Naive thymus-derived CD4-positive, alpha-beta T cell (primary cell): ENCODE measurements at regions of chr21 and their contacts with region 1.

Region 1: DNA sequence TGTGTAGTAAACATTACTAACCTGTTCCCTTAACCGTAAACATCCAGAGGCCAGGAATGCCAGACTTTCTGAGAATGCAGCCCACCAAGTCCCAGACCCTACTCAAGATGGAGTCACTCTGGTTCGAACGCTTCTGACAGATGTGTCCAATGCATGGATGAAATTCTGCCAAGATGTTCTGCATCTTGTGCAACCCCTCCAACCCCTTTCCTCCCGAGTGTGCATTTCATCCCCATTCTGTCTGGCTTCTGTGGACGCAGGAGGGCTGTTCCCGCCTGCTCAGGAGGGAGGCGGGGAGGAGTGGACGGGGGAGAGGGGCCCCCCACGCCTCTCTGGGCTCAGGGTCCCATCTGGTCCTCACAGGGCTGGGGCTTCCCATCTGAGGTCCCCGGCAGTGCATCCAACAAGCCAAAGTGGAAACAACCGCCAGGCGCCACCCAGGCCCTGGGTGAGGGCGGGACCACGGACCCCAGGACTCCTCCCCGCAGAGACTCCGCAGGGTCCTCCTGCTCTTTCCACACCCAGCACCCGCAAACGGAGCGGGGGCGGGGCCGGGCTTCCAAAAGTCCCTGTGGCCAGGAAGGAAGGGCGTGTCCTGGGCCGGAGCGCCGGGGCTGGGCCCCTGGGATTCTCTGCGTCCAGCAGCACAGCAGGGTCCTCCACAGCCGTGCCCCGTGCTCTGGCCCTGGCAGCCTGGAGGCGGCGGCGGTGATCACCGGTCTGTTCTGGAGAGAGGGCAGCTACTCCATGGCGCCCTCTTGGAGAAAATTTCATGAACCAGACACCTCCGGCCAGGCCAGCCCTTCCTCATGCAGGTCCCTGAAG is 27.7 kb upstream of the SUMO3 start:
- DNase-seq: peak; percentile 15 to 75 (median 37)
- ATAC-seq: peak; percentile 77
- H3K4me3 ChIP-seq: peak overlapping the region; percentile 51
- H3K4me3 Mint-ChIP-seq: peak overlapping the region; percentile 65 to 80 (median 78)
- H3K27ac ChIP-seq: peak overlapping the region; percentile 58
- H3K27ac Mint-ChIP-seq: peak overlapping the region; percentile 57 to 90 (median 76)
- H3K4me1 ChIP-seq: peaks cover 6 to 11% of the 10 kb centered on the region in 2 donors
- H3K4me1 Mint-ChIP-seq: peaks cover 3 to 24% (median 13%) of the 10 kb centered on the region in 7 donors
- H3K27me3 ChIP-seq: no peaks in the 10 kb centered on the region
- H3K27me3 Mint-ChIP-seq: peaks cover 0 to 4% (median 0%) of the 10 kb centered on the region in 5 donors

Region 2: DNA sequence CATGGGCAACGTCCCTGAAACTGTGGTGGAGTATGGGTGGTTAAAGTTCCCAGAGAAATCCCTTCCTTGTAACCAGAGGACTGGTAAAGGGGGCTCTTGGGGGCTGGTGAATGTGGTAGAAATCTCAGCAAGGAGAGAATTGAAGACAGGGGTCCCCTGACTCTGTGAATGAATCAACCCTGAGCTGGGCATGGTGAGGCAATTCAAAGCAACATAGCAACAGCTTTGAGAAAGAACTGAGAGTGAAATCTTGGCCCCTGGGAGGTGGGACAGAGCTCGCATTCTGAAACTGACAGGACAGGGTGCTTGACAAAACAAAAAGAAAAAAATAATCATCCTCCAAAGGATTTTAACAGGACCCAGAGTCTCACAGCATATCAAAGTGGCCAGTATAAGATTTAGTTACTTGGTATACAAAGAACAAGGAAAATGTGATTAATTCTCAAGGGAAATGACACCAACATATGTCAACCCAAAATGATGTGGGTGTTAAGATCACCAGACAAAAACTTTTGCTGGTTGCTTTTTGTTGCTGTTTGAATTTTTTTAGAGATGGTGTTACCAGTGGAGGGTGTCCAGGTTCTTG is 16.0 kb before region 1 on chr21:
- CTCF ChIA-PET with region 1: no interaction called
- POLR2A ChIA-PET with region 1: no interaction called
- intact Hi-C with region 1: loop called in 1 of 2 experiments (anchors 2 kb)
- DNase-seq: no peak
- ATAC-seq: peak; percentile 32
- H3K4me3 ChIP-seq: no peak overlapping the region
- H3K4me3 Mint-ChIP-seq: no peak overlapping the region
- H3K27ac ChIP-seq: no peak overlapping the region
- H3K27ac Mint-ChIP-seq: no peak overlapping the region
- H3K4me1 ChIP-seq: peaks cover 0 to 5% of the 10 kb centered on the region in 2 donors
- H3K4me1 Mint-ChIP-seq: peaks cover 6 to 32% (median 15%) of the 10 kb centered on the region in 7 donors
- H3K27me3 ChIP-seq: no peaks in the 10 kb centered on the region
- H3K27me3 Mint-ChIP-seq: peaks cover 0 to 6% (median 0%) of the 10 kb centered on the region in 5 donors

Region 3: GRCh38 chr21:44865561-44866280 is 20.1 kb after region 1 on chr21:
- CTCF ChIA-PET with region 1: interaction called, 3 read pairs
- POLR2A ChIA-PET with region 1: interaction called, 3 read pairs
- intact Hi-C with region 1: loop called in 1 of 2 experiments (anchors 1 kb)
- DNase-seq: peak in 2 of 9 donors; percentile 24 to 42
- ATAC-seq: peak; percentile 72
- H3K4me3 ChIP-seq: no peak overlapping the region
- H3K4me3 Mint-ChIP-seq: peak overlapping the region; percentile 57 to 83 (median 76)
- H3K27ac ChIP-seq: peak overlapping the region; percentile 30
- H3K27ac Mint-ChIP-seq: peak overlapping the region in 8 of 9 donors; percentile 36 to 93 (median 86)
- H3K4me1 ChIP-seq: peaks cover 47 to 54% of the 10 kb centered on the region in 2 donors
- H3K4me1 Mint-ChIP-seq: peaks cover 64 to 90% (median 78%) of the 10 kb centered on the region in 7 donors
- H3K27me3 ChIP-seq: no peaks in the 10 kb centered on the region
- H3K27me3 Mint-ChIP-seq: no peaks in the 10 kb centered on the region

Region 4: DNA sequence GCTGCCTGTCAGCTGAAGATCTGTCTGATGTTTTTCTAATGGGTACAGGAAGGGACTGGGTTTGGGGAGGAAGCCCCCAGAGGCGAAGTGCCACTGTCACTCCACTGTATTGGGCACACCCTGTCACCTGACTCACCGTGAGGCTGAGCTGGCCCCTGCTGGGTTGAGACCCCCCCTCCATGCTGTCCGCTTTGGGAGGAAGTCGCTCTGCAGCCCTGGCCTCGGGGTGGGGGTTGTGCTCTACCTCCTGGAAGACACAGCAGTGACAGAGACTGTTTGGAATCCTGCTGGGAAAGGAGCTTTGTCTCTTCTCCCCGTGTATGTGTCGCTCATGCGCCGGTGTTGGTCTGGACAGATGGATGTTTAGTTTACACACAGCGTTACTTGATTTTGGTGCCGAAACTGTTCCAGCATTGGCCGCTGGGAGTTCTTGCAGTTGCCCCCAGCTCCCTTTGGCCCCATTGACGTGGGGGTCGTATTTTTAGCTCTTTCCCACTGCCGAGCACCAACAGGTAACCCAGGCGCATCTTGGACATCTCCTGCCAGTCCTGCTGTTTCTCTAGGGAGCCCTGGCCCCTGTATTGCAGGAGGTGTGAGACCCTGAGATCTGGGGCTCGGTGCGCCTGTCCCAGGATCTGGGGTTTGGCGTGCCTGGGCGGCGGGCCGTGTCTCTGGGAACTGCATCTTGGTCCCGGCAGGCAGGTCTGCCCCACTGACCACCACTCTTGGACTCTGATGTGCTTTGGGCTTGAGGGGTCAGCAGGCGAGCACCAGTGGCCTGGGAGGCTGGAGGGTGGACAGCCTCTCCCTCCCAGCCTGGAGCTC is 124.5 kb after region 1 on chr21:
- CTCF ChIA-PET with region 1: no interaction called
- POLR2A ChIA-PET with region 1: no interaction called
- intact Hi-C with region 1: no loop called
- DNase-seq: no peak
- ATAC-seq: peak; percentile 67
- H3K4me3 ChIP-seq: no peak overlapping the region
- H3K4me3 Mint-ChIP-seq: peak overlapping the region in 4 of 10 donors; percentile 3 to 52 (median 23)
- H3K27ac ChIP-seq: no peak overlapping the region
- H3K27ac Mint-ChIP-seq: peak overlapping the region in 3 of 9 donors; percentile 10 to 61 (median 28)
- H3K4me1 ChIP-seq: peaks cover 8 to 28% of the 10 kb centered on the region in 2 donors
- H3K4me1 Mint-ChIP-seq: peaks cover 18 to 45% (median 34%) of the 10 kb centered on the region in 7 donors
- H3K27me3 ChIP-seq: no peaks in the 10 kb centered on the region
- H3K27me3 Mint-ChIP-seq: no peaks in the 10 kb centered on the region

Region 5: DNA sequence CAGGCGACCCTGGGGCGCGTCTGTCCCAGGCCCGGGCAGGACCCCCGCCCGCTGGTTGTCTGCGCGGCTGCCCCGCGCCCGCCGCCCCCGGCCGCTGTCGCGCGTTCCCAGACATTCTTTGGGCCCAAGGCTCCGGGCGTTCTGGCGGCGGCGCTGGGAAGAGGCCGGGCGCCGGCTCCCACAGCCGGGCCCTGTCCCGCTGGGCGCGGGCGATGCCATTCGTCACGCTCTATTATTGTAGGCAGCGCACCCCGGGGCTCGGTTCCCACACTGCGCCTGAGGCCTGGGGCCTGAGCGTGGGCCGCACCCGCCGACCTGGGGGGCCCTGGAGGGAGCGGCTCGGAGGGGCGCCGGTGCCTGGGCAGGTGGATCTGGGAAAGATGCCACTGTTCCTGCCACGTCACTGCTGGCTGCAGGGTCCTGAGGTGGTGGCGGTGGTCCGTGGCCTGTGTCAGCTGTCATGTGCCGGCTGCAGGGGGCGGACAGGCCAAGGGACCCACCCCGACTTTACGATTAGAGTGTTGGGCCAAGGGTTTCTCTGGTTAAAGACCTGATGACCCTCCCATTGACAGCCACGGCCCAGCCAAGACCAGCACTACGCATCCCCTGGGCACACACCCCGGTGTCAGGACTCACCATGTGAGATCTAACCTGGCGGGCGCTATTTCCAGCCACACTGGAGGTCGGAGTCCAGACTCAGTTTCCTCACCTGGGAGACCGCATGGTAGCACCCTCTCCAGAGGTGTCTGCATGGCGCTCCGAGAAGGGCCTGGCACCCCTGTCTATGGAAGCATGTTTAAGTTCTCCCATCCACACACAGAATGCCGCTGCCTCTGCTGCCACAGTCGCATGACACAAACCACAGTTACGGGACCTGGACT is 173.7 kb after region 1 on chr21:
- CTCF ChIA-PET with region 1: no interaction called
- POLR2A ChIA-PET with region 1: no interaction called
- intact Hi-C with region 1: no loop called
- DNase-seq: peak in 1 of 9 donors; percentile 1
- ATAC-seq: no peak
- H3K4me3 ChIP-seq: no peak overlapping the region
- H3K4me3 Mint-ChIP-seq: peak overlapping the region in 9 of 10 donors; percentile 9 to 64 (median 47)
- H3K27ac ChIP-seq: no peak overlapping the region
- H3K27ac Mint-ChIP-seq: no peak overlapping the region
- H3K4me1 ChIP-seq: no peaks in the 10 kb centered on the region
- H3K4me1 Mint-ChIP-seq: peaks cover 2 to 8% (median 8%) of the 10 kb centered on the region in 7 donors
- H3K27me3 ChIP-seq: peaks cover 4 to 6% of the 10 kb centered on the region in 2 donors
- H3K27me3 Mint-ChIP-seq: peaks cover 27 to 53% (median 35%) of the 10 kb centered on the region in 5 donors